ENCODE measurements at regions of chr5 and their contacts with region 1.

Region 1: GRCh38 chr5:157253547-157253946 is 12.4 kb upstream of the CYFIP2 start:
- DNase-seq: peak; percentile 5
- H3K4me3 ChIP-seq: no peak overlapping the region
- H3K27me3 ChIP-seq: peaks cover 6% of the 10 kb centered on the region; the same call in 1 of the 2 replicates
- CTCF ChIP-seq: peak; percentile 93

Region 2: DNA sequence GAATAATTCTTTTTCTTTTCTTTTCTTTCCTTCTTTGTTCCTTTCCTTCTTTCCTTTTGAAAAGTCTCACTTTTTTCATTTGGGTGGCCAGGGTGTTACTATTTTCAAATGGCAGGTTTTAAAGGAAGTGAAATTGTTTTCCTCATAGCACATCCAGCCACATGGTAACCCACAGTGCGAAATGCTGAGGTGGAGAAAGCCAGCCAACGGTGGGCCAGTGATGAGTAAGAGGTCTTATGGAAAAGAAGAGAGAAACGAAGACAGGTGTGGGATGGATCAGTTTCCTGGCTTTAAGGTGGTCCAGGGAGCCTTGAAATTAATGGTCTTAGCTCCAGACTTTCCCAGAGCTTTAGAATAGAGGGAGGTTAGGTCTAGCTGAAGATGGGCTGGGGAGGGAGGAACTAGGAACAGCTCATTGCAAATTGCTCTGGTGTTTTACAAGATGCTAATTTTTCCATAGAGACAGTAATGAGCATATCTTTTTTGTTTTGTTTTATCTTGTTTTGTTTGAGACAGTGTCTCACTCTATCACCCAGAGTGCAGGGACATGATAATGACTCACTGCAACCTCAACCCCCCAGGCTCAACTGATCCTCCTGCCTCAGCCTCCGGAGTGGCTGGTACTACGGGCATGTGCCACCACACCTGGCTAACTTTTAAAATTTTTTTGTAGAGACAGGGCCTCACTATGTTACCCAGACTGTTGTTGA is 55.1 kb before region 1 on chr5:
- CTCF ChIA-PET with region 1: no interaction called
- POLR2A ChIA-PET with region 1: no interaction called
- DNase-seq: no peak
- H3K4me3 ChIP-seq: no peak overlapping the region
- H3K27me3 ChIP-seq: no peaks in the 10 kb centered on the region
- CTCF ChIP-seq: no peak

Region 3: DNA sequence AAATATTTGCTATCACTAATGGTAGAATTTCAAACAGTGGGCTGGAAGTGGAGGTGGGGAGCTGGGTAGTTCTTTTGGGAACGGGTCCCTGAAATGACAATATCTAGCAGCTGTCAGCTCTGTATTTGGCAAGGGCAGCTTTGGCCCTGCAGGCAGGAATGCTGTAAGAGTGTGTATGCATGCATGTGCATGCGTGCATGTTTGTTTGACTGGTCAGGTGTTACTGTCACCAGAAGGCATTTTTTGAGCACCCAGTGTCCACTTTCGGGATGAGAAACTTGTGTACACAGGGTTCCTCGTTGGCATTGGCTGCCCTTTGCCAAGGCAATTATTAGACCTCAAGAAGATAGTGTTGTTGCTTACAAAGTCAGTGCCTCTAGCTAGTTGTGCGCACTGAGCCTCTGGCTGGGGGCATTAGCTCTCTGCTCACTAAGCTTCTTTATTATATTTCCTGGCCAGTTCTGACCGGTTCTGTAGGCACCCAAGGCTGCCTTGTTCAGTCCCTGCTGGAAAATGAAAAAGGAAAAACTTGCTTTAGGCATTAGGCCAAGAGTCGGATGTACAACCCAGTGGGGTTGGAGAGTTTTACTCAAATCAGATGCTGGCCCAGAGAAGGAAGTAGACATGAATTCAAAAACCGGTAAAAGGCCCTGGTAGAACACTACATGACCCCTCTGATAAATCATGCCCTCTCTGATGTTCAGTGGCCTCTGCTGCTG is 14.4 kb after region 1 on chr5:
- CTCF ChIA-PET with region 1: interaction called, 25 read pairs
- POLR2A ChIA-PET with region 1: no interaction called
- DNase-seq: no peak
- H3K4me3 ChIP-seq: no peak overlapping the region
- H3K27me3 ChIP-seq: peaks cover 6% of the 10 kb centered on the region
- CTCF ChIP-seq: no peak

Region 4: DNA sequence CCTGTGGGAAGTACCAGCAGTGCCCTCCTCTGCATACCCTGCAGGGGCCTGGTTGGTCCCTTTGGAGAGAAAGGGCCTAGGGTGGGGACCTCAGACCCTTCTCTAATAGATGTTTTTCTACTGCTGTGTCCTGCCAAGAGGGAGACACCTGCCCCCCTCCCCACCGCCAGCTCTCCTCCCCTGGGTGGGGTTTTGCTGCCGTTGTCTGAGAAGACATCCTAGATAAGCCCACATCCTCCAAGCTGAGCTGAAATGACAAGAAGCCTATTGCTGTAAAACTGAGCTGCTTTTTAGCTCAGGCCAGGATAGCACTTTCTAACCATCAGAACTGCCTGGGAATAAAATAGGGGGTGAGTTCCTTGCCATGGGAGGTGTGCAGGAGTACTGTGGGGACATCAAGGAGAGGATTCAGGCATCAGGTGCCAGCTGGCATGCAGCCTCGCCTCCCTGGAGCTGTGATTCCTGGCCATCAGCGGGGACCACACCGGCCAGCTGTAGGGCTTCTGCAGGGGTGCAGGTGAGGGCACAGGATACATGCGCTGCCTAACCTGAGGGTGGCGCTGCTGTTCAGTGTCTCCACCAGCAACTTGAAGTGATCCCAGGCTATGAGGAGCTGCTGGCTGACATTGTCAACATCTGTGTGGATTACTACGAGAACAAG is 50.2 kb after region 1 on chr5:
- CTCF ChIA-PET with region 1: interaction called, 21 read pairs
- POLR2A ChIA-PET with region 1: no interaction called
- DNase-seq: no peak
- H3K4me3 ChIP-seq: no peak overlapping the region
- H3K27me3 ChIP-seq: no peaks in the 10 kb centered on the region
- CTCF ChIP-seq: 0 out of 2 replicates have a peak, but pooled peaks have one; percentile 17

Region 5: GRCh38 chr5:157312492-157312891 is 58.9 kb after region 1 on chr5:
- CTCF ChIA-PET with region 1: interaction called, 74 read pairs
- POLR2A ChIA-PET with region 1: no interaction called
- DNase-seq: no peak
- H3K4me3 ChIP-seq: no peak overlapping the region
- H3K27me3 ChIP-seq: no peaks in the 10 kb centered on the region
- CTCF ChIP-seq: peak; percentile 82

Region 6: GRCh38 chr5:157362012-157362411 is 108.5 kb after region 1 on chr5:
- CTCF ChIA-PET with region 1: no interaction called
- POLR2A ChIA-PET with region 1: no interaction called
- DNase-seq: no peak
- H3K4me3 ChIP-seq: no peak overlapping the region
- H3K27me3 ChIP-seq: no peaks in the 10 kb centered on the region
- CTCF ChIP-seq: no peak

Region 7: GRCh38 chr5:157400741-157401495 is 147.4 kb after region 1 on chr5:
- CTCF ChIA-PET with region 1: no interaction called
- POLR2A ChIA-PET with region 1: no interaction called
- DNase-seq: no peak
- H3K4me3 ChIP-seq: no peak overlapping the region
- H3K27me3 ChIP-seq: no peaks in the 10 kb centered on the region
- CTCF ChIP-seq: no peak

Region 8: GRCh38 chr5:157449011-157449723 is 195.6 kb after region 1 on chr5:
- CTCF ChIA-PET with region 1: no interaction called
- POLR2A ChIA-PET with region 1: no interaction called
- DNase-seq: no peak
- H3K4me3 ChIP-seq: no peak overlapping the region
- H3K27me3 ChIP-seq: no peaks in the 10 kb centered on the region
- CTCF ChIP-seq: no peak